Activated naive CD4-positive, alpha-beta T cell treated with anti-CD3 and anti-CD28 coated beads for 36 hours (primary cell): ENCODE measurements at regions of chr7 and their contacts with region 1.

Region 1: GRCh38 chr7:92833024-92833765 is 3.2 kb downstream of the CDK6 start:
- DNase-seq: peak; percentile 94
- H3K4me3 Mint-ChIP-seq: peak overlapping the region; percentile 89
- H3K27ac Mint-ChIP-seq: peak overlapping the region; percentile 98
- H3K4me1 Mint-ChIP-seq: peaks cover 36% of the 10 kb centered on the region
- H3K27me3 Mint-ChIP-seq: peaks cover 5% of the 10 kb centered on the region

Region 2: DNA sequence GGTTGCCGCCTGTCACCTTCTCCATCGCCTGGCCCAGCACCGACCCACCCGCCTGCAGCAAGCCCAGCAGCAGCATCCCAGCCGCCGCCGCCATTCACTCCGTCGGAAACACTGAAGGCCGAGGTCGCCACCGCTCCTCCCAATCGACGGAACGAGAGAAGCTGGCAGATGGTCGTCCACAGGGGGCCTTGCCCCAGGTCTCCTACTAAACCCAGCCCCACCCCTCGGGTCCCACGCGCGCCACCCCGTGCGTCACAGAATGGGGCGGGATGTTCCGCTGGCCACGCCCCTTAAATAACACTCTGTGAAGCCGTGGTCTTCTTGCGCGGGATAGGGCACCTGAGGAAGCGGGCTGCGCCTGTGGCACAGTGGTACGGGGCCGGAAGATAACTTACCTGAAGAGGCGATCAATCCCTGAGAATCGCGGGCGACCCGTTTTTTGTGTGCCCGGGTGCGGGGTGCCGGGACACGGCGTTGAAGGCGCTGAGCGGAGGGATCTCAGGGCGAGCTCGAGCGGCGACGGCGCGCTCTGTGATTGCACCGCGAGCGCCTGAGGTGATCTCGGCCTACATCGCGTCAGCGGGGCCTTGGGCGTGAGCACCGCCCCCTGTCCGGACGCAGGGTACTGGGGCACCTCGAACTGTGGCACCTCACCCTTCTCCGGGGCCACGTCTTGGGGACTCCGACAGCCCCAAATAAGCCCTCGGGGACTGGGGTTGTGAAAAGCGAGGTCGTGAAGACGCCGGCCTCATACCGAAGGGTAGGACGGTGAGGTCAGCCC is 698.7 kb before region 1 on chr7 and contains the start of gene CYP51A1:
- CTCF ChIA-PET with region 1: no interaction called
- intact Hi-C with region 1: loop called (anchors 10 kb)
- DNase-seq: peak; percentile 93
- H3K4me3 Mint-ChIP-seq: peak within 1 kb of the TSS; percentile 96
- H3K27ac Mint-ChIP-seq: peak within 1 kb of the TSS; percentile 99
- H3K4me1 Mint-ChIP-seq: peaks cover 36% of the 10 kb centered on the region
- H3K27me3 Mint-ChIP-seq: no peaks in the 10 kb centered on the region
- total RNA-seq, gene CYP51A1: 52.8 to 55.5 TPM

Region 3: DNA sequence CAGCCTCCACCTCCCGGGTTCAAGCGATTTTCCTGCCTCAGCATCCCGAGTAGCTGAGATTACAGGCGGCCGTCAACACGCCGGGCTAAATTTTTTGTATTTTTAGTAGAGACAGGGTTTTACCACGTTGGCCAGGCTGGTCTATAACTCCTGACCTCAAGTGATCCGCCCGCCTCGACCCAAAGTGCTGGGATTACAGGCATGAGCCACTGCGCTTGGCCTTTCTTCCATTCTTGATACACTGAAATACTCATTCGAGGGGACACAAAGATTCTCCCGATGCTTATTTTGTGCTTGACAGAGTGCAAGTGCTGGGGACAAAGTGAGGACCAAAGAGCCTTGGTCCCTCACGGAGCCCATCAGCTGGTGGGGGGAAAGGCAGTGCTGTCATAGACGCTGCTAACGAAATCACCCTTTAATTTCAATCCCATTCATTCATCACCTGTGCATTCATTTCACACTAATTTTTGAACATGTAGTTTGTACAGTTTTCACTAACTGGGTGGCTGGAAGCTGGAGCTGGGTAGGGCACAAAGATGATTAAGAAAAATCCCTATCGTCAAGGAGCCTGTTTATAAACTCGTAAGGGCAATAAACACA is 242.4 kb before region 1 on chr7:
- CTCF ChIA-PET with region 1: interaction called, 3 read pairs
- intact Hi-C with region 1: loop called (anchors 1 kb)
- DNase-seq: no peak
- H3K4me3 Mint-ChIP-seq: peak overlapping the region; percentile 86
- H3K27ac Mint-ChIP-seq: no peak overlapping the region
- H3K4me1 Mint-ChIP-seq: peaks cover 39% of the 10 kb centered on the region
- H3K27me3 Mint-ChIP-seq: peaks cover 3% of the 10 kb centered on the region

Region 4: DNA sequence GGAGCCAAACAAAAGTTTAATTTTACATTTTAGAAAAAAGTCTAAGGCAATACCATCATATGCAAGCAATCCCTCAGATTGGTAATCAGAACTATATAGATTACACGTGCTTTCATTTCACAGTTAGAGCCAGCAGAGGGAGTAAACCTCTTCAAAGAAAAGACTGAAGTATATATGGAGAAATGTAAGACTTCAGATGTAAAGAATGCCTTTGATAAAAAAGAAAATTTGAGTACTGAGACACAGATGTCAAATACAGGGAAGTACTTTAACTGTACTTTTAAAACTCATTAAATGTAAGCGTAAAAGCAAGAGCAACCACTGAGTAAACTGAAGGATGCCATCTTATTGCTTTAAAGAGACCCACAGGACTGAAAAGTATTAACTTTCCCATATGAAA is 141.6 kb before region 1 on chr7:
- CTCF ChIA-PET with region 1: interaction called, 8 read pairs
- intact Hi-C with region 1: loop called (anchors 1 kb)
- DNase-seq: peak; percentile 46
- H3K4me3 Mint-ChIP-seq: no peak overlapping the region
- H3K27ac Mint-ChIP-seq: peak overlapping the region; percentile 87
- H3K4me1 Mint-ChIP-seq: peaks cover 70% of the 10 kb centered on the region
- H3K27me3 Mint-ChIP-seq: no peaks in the 10 kb centered on the region

Region 5: GRCh38 chr7:92768501-92769393 is 64.4 kb before region 1 on chr7:
- CTCF ChIA-PET with region 1: interaction called, 3 read pairs
- intact Hi-C with region 1: loop called (anchors 1 kb)
- DNase-seq: peak; percentile 76
- H3K4me3 Mint-ChIP-seq: peak overlapping the region; percentile 48
- H3K27ac Mint-ChIP-seq: peak overlapping the region; percentile 92
- H3K4me1 Mint-ChIP-seq: peaks cover 70% of the 10 kb centered on the region
- H3K27me3 Mint-ChIP-seq: no peaks in the 10 kb centered on the region

Region 6: DNA sequence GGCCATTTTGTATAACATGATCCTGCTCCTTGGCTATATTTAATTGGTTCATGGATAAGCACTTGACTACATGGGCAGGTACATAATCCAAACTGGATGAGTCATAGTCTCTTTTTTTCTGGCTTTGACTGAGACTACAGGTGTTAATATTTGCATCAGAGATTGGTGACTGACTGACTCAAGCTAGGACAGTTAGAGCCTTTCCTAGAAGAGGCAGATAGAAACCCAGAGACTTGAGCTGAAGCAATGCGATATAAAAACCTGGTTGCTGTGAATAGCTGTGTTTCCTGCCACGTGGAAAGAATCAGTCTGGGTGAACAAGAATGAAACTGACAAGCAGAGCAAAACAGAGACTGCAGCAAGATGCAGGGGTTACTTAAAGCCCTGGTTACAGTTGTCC is 203.6 kb after region 1 on chr7:
- CTCF ChIA-PET with region 1: no interaction called
- intact Hi-C with region 1: loop called (anchors 1 kb)
- DNase-seq: peak; percentile 74
- H3K4me3 Mint-ChIP-seq: no peak overlapping the region
- H3K27ac Mint-ChIP-seq: peak overlapping the region; percentile 59
- H3K4me1 Mint-ChIP-seq: peaks cover 22% of the 10 kb centered on the region
- H3K27me3 Mint-ChIP-seq: no peaks in the 10 kb centered on the region

Region 7: GRCh38 chr7:93949461-93949860 is 1116.3 kb after region 1 on chr7:
- CTCF ChIA-PET with region 1: no interaction called
- intact Hi-C with region 1: no loop called
- DNase-seq: no peak
- H3K4me3 Mint-ChIP-seq: no peak overlapping the region
- H3K27ac Mint-ChIP-seq: no peak overlapping the region
- H3K4me1 Mint-ChIP-seq: no peaks in the 10 kb centered on the region
- H3K27me3 Mint-ChIP-seq: peaks cover 3% of the 10 kb centered on the region